Prostate gland (tissue), 2 donors: ENCODE measurements at regions of chr9 and their contacts with region 1.

Region 1: GRCh38 chr9:92634712-92635605 is 35.0 kb downstream of the IPPK start:
- DNase-seq: peak; percentile 39
- H3K4me3 ChIP-seq: no peak overlapping the region
- H3K27ac ChIP-seq: no peak overlapping the region
- H3K4me1 ChIP-seq: no peaks in the 10 kb centered on the region
- H3K27me3 ChIP-seq: no peaks in the 10 kb centered on the region
- CTCF ChIP-seq: peak; percentile 56 to 92 (median 84)
- POLR2A ChIP-seq: no peak

Region 2: DNA sequence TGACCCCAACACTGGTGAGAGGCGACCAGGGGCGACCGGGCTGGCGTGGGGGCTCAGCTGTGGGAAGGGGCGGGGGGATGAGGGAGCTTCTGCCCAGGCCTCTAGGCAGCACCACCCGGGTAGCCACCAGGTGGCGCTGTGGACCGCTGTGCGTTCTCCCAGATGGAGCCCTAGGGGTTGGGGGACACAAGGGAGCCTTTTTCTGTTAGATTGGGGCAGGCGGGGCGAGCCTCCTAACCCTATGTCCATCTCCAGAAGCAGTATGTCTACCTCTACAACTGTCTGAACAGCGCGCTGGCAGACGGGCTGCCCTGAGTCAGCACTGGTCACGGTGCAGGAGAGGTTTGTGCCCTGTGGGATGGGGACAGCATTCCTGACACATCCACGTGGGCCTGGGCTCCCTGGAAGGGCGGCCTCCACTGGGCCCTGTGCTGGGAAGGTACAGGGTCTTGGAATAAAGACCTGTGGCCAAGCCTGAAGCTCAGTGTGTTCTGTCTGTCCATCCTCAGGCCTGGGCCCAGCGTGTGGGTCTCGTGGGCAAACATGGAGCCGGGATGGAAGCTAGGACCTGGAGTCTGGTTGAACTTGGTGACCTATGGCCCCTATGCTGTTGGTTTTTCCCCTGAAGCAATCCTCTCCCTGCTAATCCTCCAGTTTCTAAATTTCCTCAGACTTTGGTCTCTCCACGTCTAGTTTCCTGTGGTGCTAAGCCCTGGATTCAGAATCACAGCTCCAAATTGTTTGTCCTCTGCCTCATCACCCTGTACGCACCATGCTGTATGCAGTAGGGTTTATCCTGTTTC is 496.6 kb before region 1 on chr9:
- intact Hi-C with region 1: loop called (anchors 5 kb)
- DNase-seq: peak; percentile 51
- H3K4me3 ChIP-seq: no peak overlapping the region
- H3K27ac ChIP-seq: no peak overlapping the region
- H3K4me1 ChIP-seq: peaks cover 3% of the 10 kb centered on the region
- H3K27me3 ChIP-seq: no peaks in the 10 kb centered on the region
- CTCF ChIP-seq: peak; percentile 60 to 90 (median 82)
- POLR2A ChIP-seq: no peak

Region 3: DNA sequence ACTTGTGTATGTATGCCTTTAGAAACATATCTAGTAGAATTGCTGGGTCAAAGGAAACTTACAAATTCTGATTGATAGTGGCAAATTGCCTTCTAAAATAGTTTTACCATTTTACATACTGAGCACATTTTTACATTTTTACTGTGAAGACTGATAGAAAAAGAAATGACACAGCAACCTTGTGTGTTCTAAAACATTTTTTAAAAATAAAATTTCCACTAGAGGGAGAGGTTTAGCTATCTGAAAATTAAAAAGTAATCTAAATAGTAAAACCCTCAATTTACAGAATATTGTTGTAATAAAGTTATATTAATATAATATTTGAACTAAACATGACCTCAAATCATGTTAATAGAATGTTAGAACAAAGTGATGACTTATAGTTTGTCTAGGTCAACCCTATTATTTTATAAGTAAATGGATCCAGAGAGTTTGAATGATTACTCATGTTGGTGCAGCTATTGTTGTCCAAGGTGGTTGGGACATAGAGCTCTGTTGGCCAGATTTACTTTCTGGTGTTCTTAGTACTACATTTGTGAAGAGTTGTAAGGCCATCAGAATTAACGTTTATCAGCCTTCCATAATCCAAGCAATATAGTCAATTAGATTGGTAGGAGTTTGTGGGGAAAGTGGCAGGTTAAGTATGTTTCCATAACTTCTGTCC is 292.0 kb before region 1 on chr9:
- intact Hi-C with region 1: loop called (anchors 2 kb)
- DNase-seq: no peak
- H3K4me3 ChIP-seq: no peak overlapping the region
- H3K27ac ChIP-seq: no peak overlapping the region
- H3K4me1 ChIP-seq: no peaks in the 10 kb centered on the region
- H3K27me3 ChIP-seq: no peaks in the 10 kb centered on the region
- CTCF ChIP-seq: peak in 3 of 4 experiments; percentile 10 to 36 (median 20)
- POLR2A ChIP-seq: no peak

Region 4: GRCh38 chr9:92438900-92439526 is 195.9 kb before region 1 on chr9:
- intact Hi-C with region 1: loop called (anchors 2 kb)
- DNase-seq: no peak
- H3K4me3 ChIP-seq: no peak overlapping the region
- H3K27ac ChIP-seq: no peak overlapping the region
- H3K4me1 ChIP-seq: no peaks in the 10 kb centered on the region
- H3K27me3 ChIP-seq: no peaks in the 10 kb centered on the region
- CTCF ChIP-seq: peak in 3 of 4 experiments; percentile 22 to 44 (median 26)
- POLR2A ChIP-seq: no peak

Region 5: DNA sequence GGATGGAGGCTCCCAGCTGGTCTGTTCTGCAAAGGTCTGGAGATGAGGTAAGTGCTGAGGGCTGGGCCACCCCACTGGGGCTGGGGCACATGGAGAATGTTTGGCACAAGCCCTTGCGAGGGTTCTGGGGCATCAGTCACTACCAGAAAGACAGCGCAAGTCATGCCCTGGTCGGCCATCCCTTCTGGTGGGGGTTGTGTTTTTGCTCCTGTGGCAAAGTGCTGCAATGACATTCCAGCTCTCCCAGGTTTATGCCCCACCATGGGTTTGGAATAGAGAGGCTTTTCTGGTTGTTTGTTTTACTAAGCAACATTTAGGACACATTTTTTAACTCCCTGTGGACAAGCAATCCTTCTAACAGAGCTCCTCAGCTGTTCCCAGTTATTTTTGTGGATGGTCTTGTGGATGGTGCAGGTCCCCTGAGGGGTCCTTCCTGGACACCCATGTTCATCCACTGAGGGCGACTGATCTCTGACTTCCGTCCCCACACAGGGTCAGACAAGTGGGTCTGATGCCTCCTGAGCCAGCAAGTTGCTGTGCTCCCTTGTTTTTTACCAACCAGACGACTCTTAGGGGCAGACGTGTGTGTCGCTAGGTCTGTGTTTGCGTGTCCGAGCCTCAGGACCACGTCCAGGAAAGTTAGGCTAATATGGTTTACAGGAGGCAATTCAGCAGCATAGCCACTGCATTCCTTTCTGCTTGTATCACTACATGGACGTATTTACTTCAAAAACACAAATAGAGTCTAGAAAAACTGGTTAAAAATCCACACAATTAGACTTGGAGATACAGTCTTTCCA is 34.3 kb before region 1 on chr9:
- intact Hi-C with region 1: no loop called
- DNase-seq: peak; percentile 3
- H3K4me3 ChIP-seq: no peak overlapping the region
- H3K27ac ChIP-seq: peak overlapping the region; percentile 49 to 59
- H3K4me1 ChIP-seq: no peaks in the 10 kb centered on the region
- H3K27me3 ChIP-seq: no peaks in the 10 kb centered on the region
- CTCF ChIP-seq: no peak
- POLR2A ChIP-seq: no peak

Region 6: DNA sequence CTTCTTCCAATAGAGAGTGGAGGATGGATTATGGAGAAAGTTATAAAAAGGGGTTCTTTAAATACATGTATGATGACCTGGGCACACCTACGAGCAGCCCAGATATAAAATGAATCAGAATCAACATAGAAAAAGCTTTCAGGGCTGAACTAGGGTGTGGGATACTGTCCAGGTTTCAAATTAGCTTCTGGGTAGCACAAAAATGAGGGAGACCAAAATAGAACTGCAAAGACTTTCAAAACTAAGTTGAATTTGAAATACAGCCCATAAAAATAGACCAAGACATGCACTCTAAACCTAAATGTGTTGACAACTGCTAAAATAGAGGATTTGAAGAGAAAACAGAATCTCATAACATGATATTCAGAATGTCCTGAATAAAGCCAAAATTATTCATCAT is 225.9 kb after region 1 on chr9:
- intact Hi-C with region 1: no loop called
- DNase-seq: no peak
- H3K4me3 ChIP-seq: no peak overlapping the region
- H3K27ac ChIP-seq: no peak overlapping the region
- H3K4me1 ChIP-seq: no peaks in the 10 kb centered on the region
- H3K27me3 ChIP-seq: no peaks in the 10 kb centered on the region
- CTCF ChIP-seq: no peak
- POLR2A ChIP-seq: no peak